H1 (cell line): ENCODE measurements at regions of chr6 and their contacts with region 1.

Region 1: GRCh38 chr6:19836799-19837510 is at the start of gene ID4:
- DNase-seq: peak; percentile 88 to 92
- H3K4me3 ChIP-seq: peak within 1 kb of the TSS; percentile 73 to 88 (median 84)
- H3K27ac ChIP-seq: no peak within 1 kb of the TSS
- H3K4me1 ChIP-seq: peaks cover 0 to 5% (median 2%) of the 10 kb centered on the region in 4 experiments; a peak in 3 of 7 replicates
- H3K27me3 ChIP-seq: peaks cover 0 to 4% (median 0%) of the 10 kb centered on the region in 4 experiments; a peak in 2 of 7 replicates
- CTCF ChIP-seq: no peak
- EP300 ChIP-seq: 0 out of 3 replicates have a peak, but pooled peaks of 1 of the 2 experiments have one; percentile 32
- POLR2A ChIP-seq: peak; percentile 97
- RAD21 ChIP-seq: no peak
- total RNA-seq, gene ID4: 8.3 and 8.8 TPM in 2 replicates

Region 2: DNA sequence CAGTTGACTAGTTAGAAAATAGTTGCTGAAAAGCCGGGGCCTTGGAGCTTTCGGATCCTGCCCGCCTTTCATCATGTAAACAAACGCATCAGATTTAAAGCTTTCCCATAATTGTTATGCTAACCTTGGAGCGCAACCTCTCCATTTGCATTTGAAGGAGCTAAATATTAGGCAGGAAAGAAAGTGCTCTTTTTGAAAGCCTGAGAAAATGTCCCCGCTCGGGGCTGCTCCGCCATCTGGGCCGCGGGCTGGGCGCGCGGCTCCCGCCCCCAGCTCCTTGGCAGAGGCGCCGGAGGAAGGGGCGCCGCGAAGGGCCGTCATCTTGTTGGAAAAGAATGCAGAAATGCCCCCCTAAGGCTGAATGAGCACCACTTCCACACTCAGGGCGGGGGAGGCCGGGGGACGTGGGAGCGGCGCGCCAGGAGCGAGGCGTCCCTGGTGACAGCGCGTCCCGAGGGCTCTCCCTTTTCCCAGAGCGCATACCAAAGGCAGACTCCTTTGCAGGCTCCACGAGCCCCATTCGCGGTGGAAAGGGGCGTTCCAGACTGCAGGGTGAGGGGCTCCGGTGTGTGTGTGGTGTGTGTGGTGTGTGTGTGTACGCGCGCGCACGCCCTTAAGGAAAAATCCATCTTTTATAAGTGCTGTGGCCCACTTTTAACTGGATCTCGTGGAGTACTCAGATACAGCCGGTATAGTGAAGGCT is 145.3 kb before region 1 on chr6:
- CTCF ChIA-PET with region 1: interaction called, 4 read pairs
- POLR2A ChIA-PET with region 1: interaction called, 19 read pairs
- DNase-seq: peak; percentile 44 to 72
- H3K4me3 ChIP-seq: peak overlapping the region; percentile 52 to 64 (median 62)
- H3K27ac ChIP-seq: peak overlapping the region; percentile 78
- H3K4me1 ChIP-seq: peaks cover 2 to 15% (median 11%) of the 10 kb centered on the region in 4 experiments; a peak in 4 of 7 replicates
- H3K27me3 ChIP-seq: no peaks in the 10 kb centered on the region
- CTCF ChIP-seq: no peak
- EP300 ChIP-seq: no peak
- POLR2A ChIP-seq: peak in 1 of 2 experiments; percentile 65; a peak in 2 of 3 replicates
- RAD21 ChIP-seq: peak; percentile 0 to 2; a peak in 2 of 4 replicates

Region 3: GRCh38 chr6:19804205-19805123 is 32.5 kb before region 1 on chr6:
- CTCF ChIA-PET with region 1: interaction called, 3 read pairs
- POLR2A ChIA-PET with region 1: interaction called, 25 read pairs
- DNase-seq: peak; percentile 82 to 93
- H3K4me3 ChIP-seq: peak overlapping the region; percentile 48 to 72 (median 68)
- H3K27ac ChIP-seq: peak overlapping the region; percentile 72
- H3K4me1 ChIP-seq: peaks cover 0 to 7% (median 3%) of the 10 kb centered on the region in 4 experiments; a peak in 4 of 7 replicates
- H3K27me3 ChIP-seq: no peaks in the 10 kb centered on the region; a peak in 1 of 7 replicates
- CTCF ChIP-seq: no peak; a peak in 1 of 4 replicates
- EP300 ChIP-seq: peak; percentile 41 to 96
- POLR2A ChIP-seq: peak; percentile 58 to 87
- RAD21 ChIP-seq: no peak

Region 4: GRCh38 chr6:19818805-19819204 is 18.1 kb before region 1 on chr6:
- CTCF ChIA-PET with region 1: interaction called, 5 read pairs
- POLR2A ChIA-PET with region 1: interaction called, 18 read pairs
- DNase-seq: no peak
- H3K4me3 ChIP-seq: no peak overlapping the region
- H3K27ac ChIP-seq: no peak overlapping the region
- H3K4me1 ChIP-seq: no peaks in the 10 kb centered on the region
- H3K27me3 ChIP-seq: no peaks in the 10 kb centered on the region
- CTCF ChIP-seq: no peak
- EP300 ChIP-seq: no peak
- POLR2A ChIP-seq: no peak
- RAD21 ChIP-seq: no peak

Region 5: GRCh38 chr6:19824058-19824807 is 12.7 kb before region 1 on chr6:
- CTCF ChIA-PET with region 1: interaction called, 5 read pairs
- POLR2A ChIA-PET with region 1: interaction called, 18 read pairs
- DNase-seq: no peak
- H3K4me3 ChIP-seq: no peak overlapping the region
- H3K27ac ChIP-seq: no peak overlapping the region
- H3K4me1 ChIP-seq: no peaks in the 10 kb centered on the region
- H3K27me3 ChIP-seq: no peaks in the 10 kb centered on the region
- CTCF ChIP-seq: no peak
- EP300 ChIP-seq: no peak
- POLR2A ChIP-seq: no peak
- RAD21 ChIP-seq: no peak

Region 6: DNA sequence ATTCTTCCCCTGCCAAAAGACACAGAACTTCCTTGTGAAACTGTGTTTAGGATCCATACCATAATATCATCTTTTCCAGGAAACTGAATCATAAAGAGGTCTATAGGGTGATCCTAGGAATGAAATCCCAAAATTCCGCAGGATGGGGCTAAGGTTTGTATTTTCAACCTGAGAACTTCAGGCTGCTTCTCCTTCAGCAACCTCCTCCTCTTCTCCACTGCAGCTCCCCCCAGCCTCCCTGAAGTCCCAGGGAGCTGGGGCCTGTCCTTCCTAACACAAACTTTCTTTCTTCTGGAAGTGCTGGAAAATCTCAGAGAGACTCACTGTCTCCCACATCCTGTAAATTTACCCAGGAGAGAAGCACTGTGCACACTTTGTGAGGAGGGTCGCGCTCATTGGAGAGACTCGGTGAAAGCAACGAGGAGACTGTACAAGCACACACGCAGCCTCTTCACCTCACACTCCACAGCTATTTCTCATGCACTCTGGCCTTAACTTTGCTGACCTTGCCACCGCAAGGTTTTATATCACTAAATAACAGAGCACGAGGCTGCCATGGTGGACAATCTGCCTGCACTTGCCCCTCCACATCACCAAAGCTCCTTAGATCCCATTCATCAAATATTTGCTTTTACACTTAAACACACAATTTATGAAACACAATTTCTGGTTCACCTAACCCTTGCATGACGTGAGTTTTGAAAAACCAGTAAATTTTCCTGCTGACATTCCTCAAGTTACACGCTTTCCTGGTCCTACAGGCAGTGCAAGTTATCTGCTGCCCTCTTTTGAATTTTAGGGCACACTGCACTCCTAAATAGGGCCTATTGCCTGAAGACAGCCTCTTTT is 14.5 kb after region 1 on chr6:
- CTCF ChIA-PET with region 1: interaction called, 5 read pairs
- POLR2A ChIA-PET with region 1: interaction called, 48 read pairs
- DNase-seq: peak in 1 of 2 experiments; percentile 49
- H3K4me3 ChIP-seq: no peak overlapping the region
- H3K27ac ChIP-seq: peak overlapping the region; percentile 54
- H3K4me1 ChIP-seq: peaks cover 4 to 6% (median 5%) of the 10 kb centered on the region in 4 experiments; a peak in 6 of 7 replicates
- H3K27me3 ChIP-seq: no peaks in the 10 kb centered on the region
- CTCF ChIP-seq: peak in 2 of 3 experiments; percentile 85 to 87; a peak in 3 of 4 replicates
- EP300 ChIP-seq: no peak
- POLR2A ChIP-seq: no peak
- RAD21 ChIP-seq: peak; percentile 96 to 98